ENCODE measurements at regions of chr18 and their contacts with region 1.

Region 1: GRCh38 chr18:58321986-58322385 is 278.0 kb downstream of the NEDD4L start:
- DNase-seq: peak in 7 of 10 donors; percentile 30 to 89 (median 52)

Region 2: DNA sequence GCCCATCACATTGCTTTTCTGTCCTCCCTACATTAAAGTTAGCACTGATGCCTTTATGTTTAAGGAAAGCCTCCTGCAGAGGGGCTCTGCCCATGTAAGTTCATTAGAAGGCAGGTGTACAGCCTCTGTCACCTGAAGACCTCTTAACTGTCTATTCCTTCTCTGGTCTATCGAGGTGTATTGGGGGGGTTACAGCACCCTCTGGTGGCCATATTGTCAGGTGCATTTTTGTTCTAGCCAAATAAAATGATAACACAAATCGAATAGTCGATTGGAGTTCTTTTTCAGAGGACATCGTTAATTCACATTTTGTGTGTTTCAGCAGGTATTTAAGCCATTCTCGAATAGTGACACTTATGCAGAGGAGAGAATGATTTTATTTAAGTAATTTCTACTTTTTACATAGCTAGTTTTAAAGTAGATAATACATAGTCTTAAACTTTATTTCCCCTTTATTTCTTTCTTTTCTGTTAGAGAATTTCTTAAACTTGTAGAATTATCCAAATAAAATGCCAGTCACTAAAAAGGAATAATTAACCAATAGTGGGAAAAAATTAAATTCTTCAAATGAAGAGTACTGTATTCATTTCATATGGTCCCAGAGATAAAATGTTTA is 141.1 kb before region 1 on chr18:
- intact Hi-C with region 1: loop called (anchors 10 kb)
- DNase-seq: peak in 5 of 10 donors; percentile 47 to 84 (median 61)

Measured in posterior cingulate gyrus (tissue), 11 donors.